Transverse colon (tissue), 4 donors: ENCODE measurements at regions of chr7 and their contacts with region 1.

Region 1: DNA sequence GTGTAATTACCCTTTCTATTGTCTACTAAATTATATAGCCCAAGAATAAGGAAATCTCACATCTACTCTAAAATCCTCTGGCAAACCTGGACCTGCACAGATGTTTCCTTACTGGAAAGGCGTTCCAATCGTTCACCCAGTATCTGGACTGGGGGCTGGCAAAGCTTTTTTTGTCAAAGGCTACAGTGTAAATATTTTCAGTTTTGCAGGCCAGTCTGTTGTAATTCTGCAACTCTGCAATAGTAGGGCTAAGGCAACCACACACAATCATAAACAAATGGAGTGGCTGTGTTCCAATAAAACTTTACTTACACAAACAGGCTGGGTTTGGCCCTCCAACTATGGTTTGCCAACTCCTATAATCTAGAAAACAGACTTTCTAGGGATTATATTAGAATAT is 56.2 kb downstream of the GLI3 start:
- DNase-seq: no peak
- H3K4me3 ChIP-seq: no peak overlapping the region
- H3K27ac ChIP-seq: no peak overlapping the region
- H3K4me1 ChIP-seq: peaks cover 0 to 4% (median 0%) of the 10 kb centered on the region in 4 donors
- H3K27me3 ChIP-seq: no peaks in the 10 kb centered on the region
- CTCF ChIP-seq: no peak
- EP300 ChIP-seq: no peak
- POLR2A ChIP-seq: no peak

Region 2: DNA sequence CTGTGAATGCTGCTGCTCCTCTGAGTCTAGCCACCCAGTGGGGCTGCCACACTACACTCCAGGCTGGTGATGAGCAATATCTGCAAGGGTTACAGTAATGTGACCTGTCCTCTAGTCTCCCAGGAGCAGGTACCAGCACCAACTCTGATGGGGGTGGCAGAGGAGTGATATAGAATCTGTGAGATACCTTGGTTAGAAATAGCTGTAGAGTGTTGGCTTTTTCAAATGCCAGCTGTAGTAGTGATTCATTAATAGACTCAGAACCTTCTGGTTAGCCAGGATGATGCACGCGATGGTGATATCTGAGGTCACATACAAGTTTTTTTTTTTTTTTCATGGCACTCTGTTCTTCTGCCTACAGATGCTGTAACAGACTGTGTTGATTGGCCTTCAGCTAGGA is 1235.0 kb before region 1 on chr7:
- in situ Hi-C with region 1: no loop called
- intact Hi-C with region 1: no loop called
- DNase-seq: no peak
- H3K4me3 ChIP-seq: no peak overlapping the region
- H3K27ac ChIP-seq: no peak overlapping the region
- H3K4me1 ChIP-seq: no peaks in the 10 kb centered on the region
- H3K27me3 ChIP-seq: no peaks in the 10 kb centered on the region
- CTCF ChIP-seq: no peak
- EP300 ChIP-seq: no peak
- POLR2A ChIP-seq: no peak

Region 3: DNA sequence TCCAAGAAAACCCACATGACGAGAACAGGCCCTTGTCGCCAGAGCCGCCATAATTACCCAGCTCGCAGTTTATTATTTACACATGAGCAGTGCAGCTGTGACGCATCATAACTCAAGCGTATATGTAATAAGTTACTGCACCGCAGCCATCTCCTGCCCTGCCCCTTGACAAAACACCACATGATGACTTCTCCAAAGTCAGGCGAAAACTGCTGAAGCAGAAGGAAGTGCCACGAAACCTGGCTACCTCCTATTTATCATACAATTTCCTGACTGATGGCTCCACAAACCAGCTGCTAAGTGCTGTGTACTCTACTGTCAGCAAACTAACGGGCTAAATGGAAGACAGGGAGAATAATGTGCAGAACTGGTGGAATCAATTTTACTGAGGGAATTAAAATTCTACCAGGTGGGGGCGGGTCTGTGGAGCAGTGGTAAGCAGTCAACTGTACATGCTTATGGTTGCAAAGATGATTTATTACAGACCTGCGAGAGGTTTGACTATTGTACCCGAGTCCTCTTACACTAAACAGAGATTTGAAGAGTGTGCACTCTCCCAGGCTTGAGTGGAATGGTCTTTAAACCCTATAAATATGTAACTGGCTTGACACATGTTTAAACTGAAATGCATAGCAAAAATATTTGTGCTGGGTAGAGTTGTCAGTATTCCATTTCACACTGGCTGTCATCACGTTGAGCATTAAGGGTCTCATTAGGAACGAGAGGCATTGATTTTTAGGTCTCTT is 99.8 kb before region 1 on chr7:
- in situ Hi-C with region 1: no loop called
- intact Hi-C with region 1: no loop called
- DNase-seq: no peak
- H3K4me3 ChIP-seq: no peak overlapping the region
- H3K27ac ChIP-seq: no peak overlapping the region
- H3K4me1 ChIP-seq: no peaks in the 10 kb centered on the region
- H3K27me3 ChIP-seq: no peaks in the 10 kb centered on the region
- CTCF ChIP-seq: no peak
- EP300 ChIP-seq: no peak
- POLR2A ChIP-seq: no peak

Region 4: DNA sequence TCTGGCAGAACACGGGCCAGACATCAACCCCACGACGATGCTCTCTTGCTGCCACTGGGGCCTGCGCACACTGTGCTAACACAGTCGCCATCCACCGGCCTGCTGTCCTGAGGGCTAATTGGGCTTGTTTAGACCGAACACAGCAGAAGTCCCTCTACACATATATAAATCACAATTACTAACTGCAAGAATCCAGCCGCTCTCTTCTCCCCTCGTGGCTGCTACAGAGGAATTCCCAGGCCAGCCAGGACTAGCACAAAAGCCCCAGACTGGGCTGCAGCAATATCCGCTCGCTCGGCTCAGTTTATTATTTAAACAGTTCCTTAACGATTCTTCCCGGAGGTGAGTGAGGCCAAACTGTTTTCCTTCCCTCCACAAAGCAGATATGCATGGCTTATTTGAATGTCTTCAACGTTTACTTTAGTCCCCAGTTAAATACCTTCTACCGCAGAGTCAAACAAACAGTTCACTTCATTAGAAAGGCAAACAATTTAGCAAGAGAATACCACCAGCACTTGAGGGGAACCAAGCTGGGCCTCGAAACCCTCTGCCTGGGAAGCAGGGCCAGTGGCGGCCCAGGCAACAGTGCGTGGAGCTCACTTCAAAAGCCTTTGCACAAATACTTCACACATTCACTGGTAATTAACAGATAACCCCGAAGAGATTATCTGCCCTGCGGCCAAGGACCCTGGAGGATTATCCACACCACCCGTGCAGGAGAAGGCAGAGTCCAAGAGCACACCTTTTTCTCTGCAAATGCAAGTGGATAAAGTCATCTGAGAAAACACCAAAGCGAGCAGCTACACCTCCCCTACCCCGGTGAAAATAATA is 89.1 kb before region 1 on chr7:
- in situ Hi-C with region 1: no loop called
- intact Hi-C with region 1: no loop called
- DNase-seq: no peak
- H3K4me3 ChIP-seq: no peak overlapping the region
- H3K27ac ChIP-seq: peak overlapping the region; percentile 32 to 78 (median 49)
- H3K4me1 ChIP-seq: peaks cover 4 to 31% (median 16%) of the 10 kb centered on the region in 4 donors
- H3K27me3 ChIP-seq: no peaks in the 10 kb centered on the region
- CTCF ChIP-seq: no peak
- EP300 ChIP-seq: no peak
- POLR2A ChIP-seq: no peak

Region 5: DNA sequence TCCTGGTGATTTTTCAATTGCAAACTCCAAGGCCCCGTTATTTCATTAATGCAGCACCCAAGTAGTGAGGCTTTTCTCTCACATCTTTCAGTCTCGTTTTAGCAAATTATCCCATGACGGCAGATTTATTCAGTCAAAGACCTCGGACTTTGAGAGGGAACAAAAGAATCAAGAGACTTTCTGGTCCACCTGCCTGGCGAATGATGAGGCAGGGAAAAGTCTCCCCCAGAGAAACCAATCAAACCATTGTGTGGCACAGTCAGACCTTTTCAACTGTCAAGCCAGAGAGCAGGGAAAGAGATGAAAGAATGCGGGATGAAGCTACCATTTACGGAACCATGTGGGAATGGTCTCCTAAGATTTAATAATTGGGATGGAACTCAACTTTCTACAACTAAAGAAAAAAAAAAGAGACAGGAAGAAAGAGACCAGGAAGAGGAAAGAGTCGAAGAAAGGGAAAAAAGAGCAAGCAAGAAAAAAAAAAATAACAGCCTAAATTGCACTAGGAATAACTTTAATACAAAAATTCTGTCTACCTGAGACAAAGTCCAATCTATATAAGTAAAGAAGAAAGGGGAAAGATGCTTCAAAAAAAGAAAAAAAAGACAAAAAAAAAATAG is 33.4 kb after region 1 on chr7:
- in situ Hi-C with region 1: no loop called
- intact Hi-C with region 1: loop called (anchors 2 kb)
- DNase-seq: no peak
- H3K4me3 ChIP-seq: no peak overlapping the region
- H3K27ac ChIP-seq: no peak overlapping the region
- H3K4me1 ChIP-seq: peaks cover 0 to 5% (median 0%) of the 10 kb centered on the region in 4 donors
- H3K27me3 ChIP-seq: no peaks in the 10 kb centered on the region
- CTCF ChIP-seq: no peak
- EP300 ChIP-seq: no peak
- POLR2A ChIP-seq: no peak